Calu3 (cell line): ENCODE measurements at regions of chr13 and their contacts with region 1.

Region 1: DNA sequence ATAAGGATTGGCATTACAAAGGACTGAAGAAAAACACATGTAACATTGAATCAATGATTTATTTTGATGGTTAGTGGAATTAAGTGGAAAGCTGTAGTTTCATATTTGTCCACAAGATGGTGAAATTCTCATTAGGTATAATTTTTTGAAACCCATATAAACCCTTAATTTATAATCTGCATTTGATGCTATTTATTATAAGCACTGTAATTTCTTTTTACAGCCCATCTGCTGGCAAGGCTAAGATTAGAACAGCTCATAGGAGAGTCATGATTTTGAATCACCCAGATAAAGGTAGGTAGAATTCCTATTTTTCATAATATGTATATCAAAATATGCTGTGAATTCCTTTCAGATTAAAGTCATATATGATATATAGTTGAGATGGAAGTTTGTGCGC is 62.2 kb downstream of the DNAJC15 start:
- DNase-seq: no peak
- H3K4me3 Mint-ChIP-seq: no peak overlapping the region
- H3K27ac Mint-ChIP-seq: no peak overlapping the region
- H3K4me1 Mint-ChIP-seq: no peaks in the 10 kb centered on the region
- H3K27me3 Mint-ChIP-seq: no peaks in the 10 kb centered on the region
- CTCF ChIP-seq: peak; percentile 28

Region 2: GRCh38 chr13:43804461-43805070 is 719.0 kb after region 1 on chr13:
- CTCF ChIA-PET with region 1: interaction called, 4 read pairs
- intact Hi-C with region 1: loop called (anchors 1 kb)
- DNase-seq: peak; percentile 31
- H3K4me3 Mint-ChIP-seq: no peak overlapping the region
- H3K27ac Mint-ChIP-seq: no peak overlapping the region
- H3K4me1 Mint-ChIP-seq: peaks cover 10% of the 10 kb centered on the region
- H3K27me3 Mint-ChIP-seq: peaks cover 12% of the 10 kb centered on the region
- CTCF ChIP-seq: no peak